ENCODE measurements at regions of chr6 and their contacts with region 1.

Region 1: GRCh38 chr6:144104898-144105487 is 9.6 kb upstream of the SF3B5 start:
- DNase-seq: peak; percentile 70
- H3K4me3 ChIP-seq: no peak overlapping the region
- H3K27ac ChIP-seq: no peak overlapping the region
- H3K4me1 ChIP-seq: no peaks in the 10 kb centered on the region
- CTCF ChIP-seq: peak; percentile 91

Region 2: GRCh38 chr6:144335926-144336325 is 230.9 kb after region 1 on chr6:
- CTCF ChIA-PET with region 1: no interaction called
- POLR2A ChIA-PET with region 1: no interaction called
- intact Hi-C with region 1: loop called (anchors 5 kb)
- DNase-seq: peak; percentile 61
- H3K4me3 ChIP-seq: peak overlapping the region; percentile 12
- H3K27ac ChIP-seq: no peak overlapping the region
- H3K4me1 ChIP-seq: peaks cover 41% of the 10 kb centered on the region
- CTCF ChIP-seq: no peak

Region 3: DNA sequence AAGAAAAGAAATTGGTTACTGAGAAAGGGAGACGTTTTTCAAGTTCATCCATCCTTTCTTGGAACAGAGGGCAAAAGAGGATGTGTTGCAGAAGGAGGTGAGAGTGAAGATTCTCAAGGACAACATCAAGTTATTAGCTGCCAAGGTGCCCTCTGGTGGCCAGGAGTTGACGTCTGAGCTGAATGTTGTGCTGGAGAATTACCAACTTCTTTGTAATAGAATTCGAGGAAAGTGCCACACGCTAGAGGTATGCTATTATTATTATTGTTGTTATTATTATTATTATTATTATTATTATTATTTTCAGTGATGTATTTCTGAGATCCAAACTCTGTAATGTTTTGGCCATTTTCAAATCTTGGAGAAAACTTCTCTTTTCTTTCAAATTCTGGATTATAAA is 377.1 kb after region 1 on chr6:
- CTCF ChIA-PET with region 1: no interaction called
- POLR2A ChIA-PET with region 1: no interaction called
- intact Hi-C with region 1: loop called (anchors 1 kb)
- DNase-seq: peak; percentile 75
- H3K4me3 ChIP-seq: no peak overlapping the region
- H3K27ac ChIP-seq: no peak overlapping the region
- H3K4me1 ChIP-seq: no peaks in the 10 kb centered on the region
- CTCF ChIP-seq: peak; percentile 83

Measured in OCI-LY7 (cell line).